Right lobe of liver (tissue), 6 donors: ENCODE measurements at regions of chr6 and their contacts with region 1.

Region 1: DNA sequence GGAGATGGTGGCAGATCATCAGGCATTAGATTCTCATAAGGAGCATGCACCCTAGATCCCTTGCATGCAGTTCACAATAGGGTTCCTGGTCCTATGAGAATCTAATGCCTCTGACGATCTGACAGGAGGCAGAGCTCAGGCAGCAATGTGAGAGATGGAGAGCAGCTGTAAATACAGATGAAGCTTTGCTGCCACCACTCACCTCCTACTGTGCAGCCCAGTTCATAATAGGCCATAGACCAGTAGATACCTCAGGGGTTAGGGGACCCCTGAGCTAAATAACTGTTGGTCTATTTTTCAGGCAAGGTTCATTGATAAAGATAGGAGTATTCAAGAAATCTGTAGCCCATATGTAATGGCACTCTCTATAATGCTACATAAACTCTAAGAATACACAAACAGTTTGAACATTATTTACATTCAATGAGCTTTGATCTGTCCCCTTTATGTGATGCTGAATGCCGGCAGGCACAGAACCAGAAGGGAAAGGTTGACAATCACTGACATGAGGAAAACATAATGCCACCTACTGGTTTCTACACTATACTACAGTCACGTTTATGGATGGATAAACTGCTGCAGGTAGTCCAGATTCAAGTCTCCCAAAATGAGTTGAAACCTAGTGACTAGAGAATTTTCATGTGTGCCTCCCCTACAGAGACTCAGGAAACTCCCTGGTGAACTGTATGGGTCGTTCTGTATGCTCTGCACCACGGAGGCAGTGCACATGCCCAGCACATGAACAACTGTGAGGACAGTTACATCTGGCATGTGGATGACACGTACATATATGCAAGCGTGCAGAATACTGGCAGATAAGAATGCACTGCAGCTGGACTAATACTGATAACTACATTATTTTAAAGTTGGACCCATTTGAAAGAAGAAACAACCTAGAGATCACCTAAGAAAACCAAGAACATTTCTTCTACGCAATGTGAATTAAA is 72.0 kb downstream of the DST start:
- DNase-seq: no peak
- ATAC-seq: peak; percentile 80 to 89 (median 88)
- H3K4me3 ChIP-seq: no peak overlapping the region
- H3K27ac ChIP-seq: peak overlapping the region in 1 of 3 donors; percentile 36
- H3K4me1 ChIP-seq: peaks cover 0 to 20% (median 3%) of the 10 kb centered on the region in 4 donors
- H3K27me3 ChIP-seq: no peaks in the 10 kb centered on the region
- CTCF ChIP-seq: peak; percentile 55 to 65 (median 57)
- POLR2A ChIP-seq: no peak

Region 2: GRCh38 chr6:56364827-56365313 is 205.8 kb before region 1 on chr6:
- intact Hi-C with region 1: loop called in 1 of 2 experiments (anchors 10 kb)
- DNase-seq: no peak
- ATAC-seq: no peak
- H3K4me3 ChIP-seq: no peak overlapping the region
- H3K27ac ChIP-seq: no peak overlapping the region
- H3K4me1 ChIP-seq: peaks cover 0 to 6% (median 1%) of the 10 kb centered on the region in 4 donors
- H3K27me3 ChIP-seq: no peaks in the 10 kb centered on the region
- CTCF ChIP-seq: no peak
- POLR2A ChIP-seq: no peak

Region 3: GRCh38 chr6:56374841-56375369 is 195.8 kb before region 1 on chr6:
- intact Hi-C with region 1: no loop called
- DNase-seq: no peak
- ATAC-seq: no peak
- H3K4me3 ChIP-seq: no peak overlapping the region
- H3K27ac ChIP-seq: peak overlapping the region in 1 of 3 donors; percentile 18
- H3K4me1 ChIP-seq: peaks cover 0 to 16% (median 6%) of the 10 kb centered on the region in 4 donors
- H3K27me3 ChIP-seq: no peaks in the 10 kb centered on the region
- CTCF ChIP-seq: no peak
- POLR2A ChIP-seq: no peak